HCT116 (cell line): ENCODE measurements at regions of chr1 and their contacts with region 1.

Region 1: GRCh38 chr1:155091071-155091709 is 12.6 kb downstream of the EFNA3 start:
- DNase-seq: peak; percentile 61
- ATAC-seq: peak; percentile 80
- H3K4me3 ChIP-seq: peak overlapping the region; percentile 22 to 33; a peak in 3 of 4 replicates
- H3K27ac ChIP-seq: no peak overlapping the region
- H3K4me1 ChIP-seq: peaks cover 15 to 37% of the 10 kb centered on the region in 2 experiments; a peak in 3 of 4 replicates
- H3K27me3 ChIP-seq: no peaks in the 10 kb centered on the region
- CTCF ChIP-seq: peak in 2 of 3 experiments; percentile 95 to 98; a peak in 4 of 6 replicates
- POLR2A ChIP-seq: no peak
- RAD21 ChIP-seq: no peak

Region 2: GRCh38 chr1:155106850-155107249 is 15.7 kb after region 1 on chr1:
- CTCF ChIA-PET with region 1: interaction called, 10 read pairs
- POLR2A ChIA-PET with region 1: no interaction called
- RAD21 ChIA-PET with region 1: no interaction called
- intact Hi-C with region 1: no loop called
- DNase-seq: no peak
- ATAC-seq: no peak
- H3K4me3 ChIP-seq: no peak overlapping the region
- H3K27ac ChIP-seq: no peak overlapping the region
- H3K4me1 ChIP-seq: no peaks in the 10 kb centered on the region
- H3K27me3 ChIP-seq: no peaks in the 10 kb centered on the region
- CTCF ChIP-seq: no peak
- POLR2A ChIP-seq: no peak
- RAD21 ChIP-seq: no peak

Region 3: GRCh38 chr1:155127105-155127964 is 36.1 kb after region 1 on chr1 and contains the start of gene EFNA1:
- CTCF ChIA-PET with region 1: interaction called, 11 read pairs
- POLR2A ChIA-PET with region 1: interaction called, 3 read pairs
- RAD21 ChIA-PET with region 1: no interaction called
- intact Hi-C with region 1: loop called (anchors 2 kb)
- DNase-seq: no peak
- ATAC-seq: peak; percentile 58
- H3K4me3 ChIP-seq: peak within 1 kb of the TSS; percentile 70 to 97
- H3K27ac ChIP-seq: peak within 1 kb of the TSS; percentile 97
- H3K4me1 ChIP-seq: peaks cover 29 to 73% of the 10 kb centered on the region in 2 experiments
- H3K27me3 ChIP-seq: no peaks in the 10 kb centered on the region
- CTCF ChIP-seq: no peak
- POLR2A ChIP-seq: no peak
- RAD21 ChIP-seq: no peak
- total RNA-seq, gene EFNA1: 19.7 TPM

Region 4: DNA sequence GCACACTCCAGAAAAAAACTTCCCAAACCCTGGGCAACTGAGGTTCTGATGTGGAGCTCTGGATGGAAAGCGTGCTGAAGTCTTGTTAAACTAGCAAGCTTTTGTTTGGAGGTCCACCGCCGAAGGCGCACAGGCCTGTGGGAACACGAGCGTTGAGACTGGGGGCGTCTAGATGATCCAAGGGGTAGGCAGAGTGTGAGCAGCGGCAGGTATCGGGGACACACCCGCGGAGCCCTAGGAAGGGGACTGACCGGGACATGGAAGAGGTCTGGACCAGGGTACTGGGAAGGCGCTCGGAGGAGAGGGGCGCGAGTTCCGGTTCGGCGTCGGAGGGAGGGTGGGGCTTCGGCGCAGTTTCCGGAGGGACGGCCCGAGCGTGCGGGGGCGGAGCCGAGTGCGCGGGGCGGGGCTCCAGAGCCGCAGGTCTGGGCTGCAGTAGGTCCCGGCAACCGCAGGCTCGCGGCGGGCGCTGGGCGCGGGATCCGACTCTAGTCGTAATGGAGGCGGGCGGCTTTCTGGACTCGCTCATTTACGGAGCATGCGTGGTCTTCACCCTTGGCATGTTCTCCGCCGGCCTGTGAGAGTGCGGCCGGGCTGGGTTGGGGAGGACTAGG is 44.3 kb after region 1 on chr1 and contains the start of gene SLC50A1:
- CTCF ChIA-PET with region 1: interaction called, 4 read pairs
- POLR2A ChIA-PET with region 1: interaction called, 4 read pairs
- RAD21 ChIA-PET with region 1: no interaction called
- intact Hi-C with region 1: loop called (anchors 2 kb)
- DNase-seq: peak; percentile 82
- ATAC-seq: peak; percentile 80
- H3K4me3 ChIP-seq: peak within 1 kb of the TSS; percentile 77 to 88
- H3K27ac ChIP-seq: peak within 1 kb of the TSS; percentile 95
- H3K4me1 ChIP-seq: peaks cover 36 to 66% of the 10 kb centered on the region in 2 experiments
- H3K27me3 ChIP-seq: no peaks in the 10 kb centered on the region
- CTCF ChIP-seq: 0 out of 6 replicates have a peak, but pooled peaks of 1 of the 3 experiments have one; percentile 13
- POLR2A ChIP-seq: peak; percentile 77
- RAD21 ChIP-seq: no peak
- total RNA-seq, gene SLC50A1: 49.9 TPM

Region 5: DNA sequence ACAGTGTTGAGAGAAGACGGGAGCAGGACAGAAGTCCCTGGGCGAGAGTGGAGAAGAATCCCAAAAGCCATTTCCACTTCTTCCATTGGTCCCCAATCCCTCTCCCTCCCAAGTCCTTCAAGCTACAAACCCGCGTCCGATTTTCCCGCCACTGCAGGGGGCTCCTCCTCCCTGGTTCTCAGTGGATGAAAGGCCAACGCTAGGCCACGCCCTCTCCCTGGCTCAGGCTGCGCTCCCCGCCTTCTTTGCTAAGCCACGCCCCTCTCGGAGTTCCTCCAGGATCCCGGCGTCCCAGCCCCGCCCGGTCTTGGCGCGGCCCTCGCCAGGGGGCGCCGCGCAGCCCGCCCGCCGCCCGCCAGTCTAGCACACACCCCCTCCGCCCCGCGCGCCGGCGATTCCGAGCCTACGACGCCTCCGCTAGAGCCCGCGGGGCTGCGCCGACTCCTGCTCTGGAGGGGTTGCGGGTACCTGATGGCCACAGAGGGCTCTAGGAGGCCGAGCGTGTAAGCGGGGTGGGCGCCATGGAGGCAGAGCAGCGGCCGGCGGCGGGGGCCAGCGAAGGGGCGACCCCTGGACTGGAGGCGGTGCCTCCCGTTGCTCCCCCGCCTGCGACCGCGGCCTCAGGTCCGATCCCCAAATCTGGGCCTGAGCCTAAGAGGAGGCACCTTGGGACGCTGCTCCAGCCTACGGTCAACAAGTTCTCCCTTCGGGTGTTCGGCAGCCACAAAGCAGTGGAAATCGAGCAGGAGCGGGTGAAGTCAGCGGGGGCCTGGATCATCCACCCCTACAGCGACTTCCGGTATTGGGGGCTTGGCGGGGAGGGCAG is 186.1 kb after region 1 on chr1 and contains the start of gene HCN3:
- CTCF ChIA-PET with region 1: no interaction called
- POLR2A ChIA-PET with region 1: no interaction called
- RAD21 ChIA-PET with region 1: no interaction called
- intact Hi-C with region 1: no loop called
- DNase-seq: peak; percentile 94
- ATAC-seq: peak; percentile 71
- H3K4me3 ChIP-seq: peak within 1 kb of the TSS; percentile 76 to 85
- H3K27ac ChIP-seq: peak within 1 kb of the TSS; percentile 63
- H3K4me1 ChIP-seq: peaks cover 10 to 33% of the 10 kb centered on the region in 2 experiments
- H3K27me3 ChIP-seq: no peaks in the 10 kb centered on the region
- CTCF ChIP-seq: peak; percentile 27 to 60 (median 46); a peak in 5 of 6 replicates
- POLR2A ChIP-seq: no peak
- RAD21 ChIP-seq: no peak; the same call in 1 of the 2 replicates
- total RNA-seq, gene HCN3: 8.5 TPM

Region 6: DNA sequence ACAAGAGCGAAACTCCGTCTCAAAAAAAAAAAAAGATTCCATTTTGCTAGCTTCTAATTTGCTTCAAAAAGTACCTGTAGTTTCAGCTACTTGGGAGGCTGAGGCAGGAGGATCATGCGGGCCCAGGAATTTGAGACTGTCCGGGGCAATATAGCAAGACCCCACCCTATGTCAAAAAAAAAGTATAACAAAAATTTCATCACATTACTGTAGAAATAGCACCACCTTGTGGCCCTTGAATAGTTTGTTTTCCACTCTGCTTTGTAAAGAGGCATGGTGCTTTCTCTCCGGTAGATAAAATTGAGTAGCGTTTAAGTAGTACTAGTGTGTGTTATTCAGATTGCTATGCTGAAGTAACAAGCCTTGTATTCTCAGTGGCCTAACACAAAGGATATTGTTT is 500.6 kb after region 1 on chr1:
- CTCF ChIA-PET with region 1: no interaction called
- POLR2A ChIA-PET with region 1: no interaction called
- RAD21 ChIA-PET with region 1: no interaction called
- intact Hi-C with region 1: loop called (anchors 10 kb)
- DNase-seq: peak; percentile 70
- ATAC-seq: peak; percentile 83
- H3K4me3 ChIP-seq: no peak overlapping the region
- H3K27ac ChIP-seq: no peak overlapping the region
- H3K4me1 ChIP-seq: no peaks in the 10 kb centered on the region
- H3K27me3 ChIP-seq: no peaks in the 10 kb centered on the region
- CTCF ChIP-seq: peak; percentile 40 to 84 (median 59)
- POLR2A ChIP-seq: no peak
- RAD21 ChIP-seq: peak; percentile 84